Activated CD4-positive, alpha-beta T cell treated with anti-CD3 and anti-CD28 coated beads for 36 hours (primary cell): ENCODE measurements at regions of chr1 and their contacts with region 1.

Region 1: DNA sequence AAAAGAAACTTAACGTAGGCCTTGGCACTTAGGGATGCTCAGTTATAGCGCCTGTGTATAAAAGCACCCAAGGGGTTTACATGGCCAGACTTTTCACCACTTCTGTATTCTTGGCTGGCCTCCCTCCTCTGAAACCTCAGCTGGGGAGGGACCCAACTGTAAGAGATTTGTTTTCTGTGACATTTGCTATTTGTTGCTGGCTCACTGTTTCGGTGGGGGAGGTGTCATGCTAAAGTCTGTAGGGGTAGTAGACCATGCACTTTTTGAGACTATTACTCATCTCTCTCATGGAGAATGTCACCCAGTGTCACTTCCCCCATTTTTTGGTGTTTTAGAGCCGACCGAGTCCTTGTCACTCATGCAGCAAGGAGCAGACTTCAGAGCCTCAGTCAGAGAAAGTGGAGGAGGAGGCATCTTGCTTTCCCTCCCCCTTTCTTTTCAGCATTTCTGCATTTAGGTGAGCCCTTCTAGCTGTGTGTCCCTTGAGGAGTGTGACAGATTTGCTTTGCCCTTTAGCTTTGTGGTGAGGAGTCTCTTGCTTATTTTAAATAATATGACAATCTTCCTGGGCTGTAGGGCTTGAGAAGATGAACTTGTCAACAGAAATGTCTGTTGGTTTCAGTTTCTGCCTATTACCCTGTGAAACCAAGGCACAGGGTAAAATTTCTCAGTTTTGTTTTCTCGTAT is 160.1 kb downstream of the FASLG start:
- DNase-seq: peak; percentile 70
- ATAC-seq: peak; percentile 96
- H3K4me3 Mint-ChIP-seq: peak overlapping the region; percentile 3
- H3K27ac Mint-ChIP-seq: peak overlapping the region; percentile 38
- H3K4me1 Mint-ChIP-seq: peaks cover 33% of the 10 kb centered on the region
- H3K27me3 Mint-ChIP-seq: peaks cover 15% of the 10 kb centered on the region

Region 2: GRCh38 chr1:172870901-172871606 is 52.1 kb after region 1 on chr1:
- CTCF ChIA-PET with region 1: no interaction called
- POLR2A ChIA-PET with region 1: no interaction called
- intact Hi-C with region 1: loop called in 1 of 2 experiments (anchors 2 kb)
- DNase-seq: peak; percentile 10
- ATAC-seq: peak; percentile 54
- H3K4me3 Mint-ChIP-seq: no peak overlapping the region
- H3K27ac Mint-ChIP-seq: no peak overlapping the region
- H3K4me1 Mint-ChIP-seq: peaks cover 33% of the 10 kb centered on the region
- H3K27me3 Mint-ChIP-seq: peaks cover 32% of the 10 kb centered on the region